Caco-2 (cell line): ENCODE measurements at regions of chr3 and their contacts with region 1.

Region 1: DNA sequence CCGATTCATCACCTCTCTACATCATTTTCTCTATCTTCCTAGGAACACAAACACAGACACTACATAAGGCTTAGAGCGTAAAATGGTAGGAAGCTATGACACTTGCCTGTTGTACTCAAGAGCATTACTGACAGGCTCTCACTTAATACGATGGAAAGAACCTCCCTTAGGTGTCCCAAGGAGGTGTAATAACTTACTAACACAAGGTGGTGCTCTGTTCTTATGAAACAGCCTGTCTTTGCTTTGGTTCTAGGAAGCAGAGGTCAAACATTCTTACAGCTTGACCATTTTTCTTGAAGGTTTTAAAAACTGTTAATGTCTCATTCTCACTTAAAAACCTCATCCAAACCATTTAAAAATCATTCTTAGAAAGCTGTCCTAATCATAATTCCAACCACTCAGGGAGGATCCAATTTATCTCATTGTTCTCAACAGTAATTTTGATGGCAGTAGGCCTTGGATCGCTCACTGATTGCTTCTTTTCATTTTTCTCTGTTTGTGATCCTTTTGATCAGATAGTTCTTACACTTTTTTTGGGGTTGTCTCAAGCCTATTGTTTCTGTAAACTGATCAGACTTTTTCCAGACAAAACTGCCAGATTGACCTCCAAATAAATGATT is 317.8 kb upstream of the AGTR1 start:
- DNase-seq: peak in 1 of 2 experiments; percentile 53
- H3K4me3 ChIP-seq: no peak overlapping the region
- H3K4me3 Mint-ChIP-seq: no peak overlapping the region
- H3K27ac Mint-ChIP-seq: no peak overlapping the region
- H3K4me1 ChIP-seq: no peaks in the 10 kb centered on the region
- H3K4me1 Mint-ChIP-seq: no peaks in the 10 kb centered on the region
- H3K27me3 ChIP-seq: no peaks in the 10 kb centered on the region
- H3K27me3 Mint-ChIP-seq: no peaks in the 10 kb centered on the region
- CTCF ChIP-seq: peak; percentile 57 to 58

Region 2: DNA sequence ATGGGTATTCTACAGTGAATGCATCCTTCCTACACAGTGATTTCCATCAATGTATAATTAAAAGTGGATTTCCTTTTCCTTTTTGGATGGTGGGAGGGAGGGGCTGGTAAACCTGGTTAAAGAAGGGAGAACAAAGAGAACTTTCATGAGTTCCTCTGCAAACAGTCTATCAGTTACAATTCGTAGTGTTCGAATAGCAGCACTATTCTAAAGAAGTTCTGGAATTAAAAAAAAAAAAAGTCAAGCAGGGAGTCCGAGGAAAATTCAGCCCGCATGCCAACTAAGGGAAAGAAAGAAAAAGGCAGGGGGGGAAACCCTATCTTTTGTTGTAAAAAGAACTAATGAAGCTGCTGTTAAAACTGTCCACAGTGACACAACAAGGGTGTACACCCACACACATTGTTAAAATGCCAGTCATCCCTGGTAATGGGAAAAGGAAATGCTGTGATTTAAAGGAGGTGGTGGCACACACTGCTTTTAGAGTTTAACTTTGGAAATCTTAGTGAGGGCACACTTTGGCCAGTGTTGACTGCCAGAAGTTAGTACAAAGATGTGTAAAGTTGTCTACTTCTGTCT is 449.6 kb before region 1 on chr3:
- CTCF ChIA-PET with region 1: no interaction called
- POLR2A ChIA-PET with region 1: no interaction called
- intact Hi-C with region 1: no loop called
- DNase-seq: no peak
- H3K4me3 ChIP-seq: no peak overlapping the region
- H3K4me3 Mint-ChIP-seq: no peak overlapping the region
- H3K27ac Mint-ChIP-seq: no peak overlapping the region
- H3K4me1 ChIP-seq: no peaks in the 10 kb centered on the region
- H3K4me1 Mint-ChIP-seq: no peaks in the 10 kb centered on the region
- H3K27me3 ChIP-seq: no peaks in the 10 kb centered on the region
- H3K27me3 Mint-ChIP-seq: no peaks in the 10 kb centered on the region
- CTCF ChIP-seq: no peak

Region 3: GRCh38 chr3:148450819-148451218 is 70.9 kb after region 1 on chr3:
- CTCF ChIA-PET with region 1: no interaction called
- POLR2A ChIA-PET with region 1: no interaction called
- intact Hi-C with region 1: loop called (anchors 5 kb)
- DNase-seq: peak in 1 of 2 experiments; percentile 29
- H3K4me3 ChIP-seq: no peak overlapping the region
- H3K4me3 Mint-ChIP-seq: no peak overlapping the region
- H3K27ac Mint-ChIP-seq: no peak overlapping the region
- H3K4me1 ChIP-seq: peaks cover 10% of the 10 kb centered on the region
- H3K4me1 Mint-ChIP-seq: peaks cover 16% of the 10 kb centered on the region
- H3K27me3 ChIP-seq: no peaks in the 10 kb centered on the region
- H3K27me3 Mint-ChIP-seq: no peaks in the 10 kb centered on the region
- CTCF ChIP-seq: no peak

Region 4: DNA sequence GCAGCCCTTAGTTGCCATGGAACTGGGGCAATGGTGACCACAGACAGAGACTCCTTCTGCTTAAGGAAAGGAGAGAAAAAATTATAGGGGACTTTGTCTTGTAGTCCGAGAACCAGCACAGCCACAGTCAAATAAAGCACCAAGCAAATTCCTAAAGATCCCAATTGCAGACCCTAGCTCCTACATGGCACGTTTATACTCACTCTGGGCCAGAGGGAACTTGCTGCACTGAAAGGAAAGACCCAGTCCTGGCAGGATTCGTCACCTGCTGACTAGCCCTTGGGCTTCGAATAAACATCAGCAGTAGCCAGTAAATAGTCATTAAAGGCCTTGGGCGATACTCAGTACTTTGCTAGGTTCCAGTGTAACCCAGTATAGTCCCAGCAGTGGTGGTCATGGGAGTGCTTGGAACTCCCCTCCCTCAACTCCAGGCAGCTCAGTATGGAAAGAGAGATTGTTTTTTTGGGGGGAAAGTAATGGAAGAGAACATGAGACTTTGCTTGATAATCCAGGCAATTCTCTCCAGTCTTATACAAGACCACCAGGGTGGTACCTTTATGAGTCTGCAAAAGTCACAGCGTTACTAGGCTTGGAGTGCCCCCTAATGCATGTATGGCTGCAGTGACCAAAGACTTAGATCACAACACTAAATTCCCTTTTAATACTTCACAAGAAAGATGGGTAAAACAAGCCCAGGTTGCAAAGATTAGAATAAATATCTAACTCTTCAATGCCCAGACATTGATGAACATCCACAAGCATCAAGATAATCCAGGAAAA is 251.4 kb after region 1 on chr3:
- CTCF ChIA-PET with region 1: interaction called, 3 read pairs
- POLR2A ChIA-PET with region 1: no interaction called
- intact Hi-C with region 1: loop called (anchors 1 kb)
- DNase-seq: peak in 1 of 2 experiments; percentile 41
- H3K4me3 ChIP-seq: no peak overlapping the region
- H3K4me3 Mint-ChIP-seq: no peak overlapping the region
- H3K27ac Mint-ChIP-seq: no peak overlapping the region
- H3K4me1 ChIP-seq: peaks cover 7% of the 10 kb centered on the region; the same call in 1 of the 2 replicates
- H3K4me1 Mint-ChIP-seq: peaks cover 7% of the 10 kb centered on the region
- H3K27me3 ChIP-seq: no peaks in the 10 kb centered on the region
- H3K27me3 Mint-ChIP-seq: no peaks in the 10 kb centered on the region
- CTCF ChIP-seq: peak; percentile 57 to 58

Region 5: GRCh38 chr3:148861277-148861869 is 481.5 kb after region 1 on chr3:
- CTCF ChIA-PET with region 1: no interaction called
- POLR2A ChIA-PET with region 1: no interaction called
- intact Hi-C with region 1: loop called (anchors 2 kb)
- DNase-seq: peak in 1 of 2 experiments; percentile 20
- H3K4me3 ChIP-seq: no peak overlapping the region
- H3K4me3 Mint-ChIP-seq: no peak overlapping the region
- H3K27ac Mint-ChIP-seq: no peak overlapping the region
- H3K4me1 ChIP-seq: no peaks in the 10 kb centered on the region
- H3K4me1 Mint-ChIP-seq: no peaks in the 10 kb centered on the region
- H3K27me3 ChIP-seq: no peaks in the 10 kb centered on the region
- H3K27me3 Mint-ChIP-seq: peaks cover 5% of the 10 kb centered on the region
- CTCF ChIP-seq: peak in 1 of 2 experiments; percentile 42

Region 6: GRCh38 chr3:148948913-148949657 is 569.2 kb after region 1 on chr3:
- CTCF ChIA-PET with region 1: no interaction called
- POLR2A ChIA-PET with region 1: no interaction called
- intact Hi-C with region 1: loop called (anchors 1 kb)
- DNase-seq: no peak
- H3K4me3 ChIP-seq: no peak overlapping the region
- H3K4me3 Mint-ChIP-seq: no peak overlapping the region
- H3K27ac Mint-ChIP-seq: no peak overlapping the region
- H3K4me1 ChIP-seq: no peaks in the 10 kb centered on the region
- H3K4me1 Mint-ChIP-seq: no peaks in the 10 kb centered on the region
- H3K27me3 ChIP-seq: no peaks in the 10 kb centered on the region
- H3K27me3 Mint-ChIP-seq: peaks cover 3% of the 10 kb centered on the region
- CTCF ChIP-seq: no peak